Activated T-helper 1 cell treated with anti-CD3 and anti-CD28 coated beads, Interleukin-12 subunit alpha, Interleukin-12 subunit beta, Interleukin-2, Interleukin-4 antibody, amounts not matched to agents 30 ng/mL and 10 ng/mL and 1 ng/mL, durations not matched to agents 14 hours and 24 hours and 36 hours (primary cell): ENCODE measurements at regions of chr6 and their contacts with region 1.

Region 1: GRCh38 chr6:46221222-46221793 is 50.5 kb upstream of the ENPP5 start:
- DNase-seq: no peak
- H3K4me3 Mint-ChIP-seq: no peak overlapping the region
- H3K27ac Mint-ChIP-seq: no peak overlapping the region
- H3K4me1 Mint-ChIP-seq: peaks cover 11% of the 10 kb centered on the region
- H3K27me3 Mint-ChIP-seq: peaks cover 6% of the 10 kb centered on the region

Region 2: GRCh38 chr6:46129629-46130511 is 91.4 kb before region 1 on chr6 and contains the start of gene ENPP4:
- intact Hi-C with region 1: loop called (anchors 2 kb)
- DNase-seq: peak; percentile 92
- H3K4me3 Mint-ChIP-seq: peak within 1 kb of the TSS; percentile 91
- H3K27ac Mint-ChIP-seq: peak within 1 kb of the TSS; percentile 75
- H3K4me1 Mint-ChIP-seq: peaks cover 25% of the 10 kb centered on the region
- H3K27me3 Mint-ChIP-seq: peaks cover 2% of the 10 kb centered on the region
- total RNA-seq, gene ENPP4: 5.9 and 6.1 TPM in 2 replicates

Region 3: GRCh38 chr6:46410334-46410953 is 189.1 kb after region 1 on chr6:
- intact Hi-C with region 1: loop called (anchors 1 kb)
- DNase-seq: no peak
- H3K4me3 Mint-ChIP-seq: no peak overlapping the region
- H3K27ac Mint-ChIP-seq: no peak overlapping the region
- H3K4me1 Mint-ChIP-seq: no peaks in the 10 kb centered on the region
- H3K27me3 Mint-ChIP-seq: peaks cover 6% of the 10 kb centered on the region

Region 4: DNA sequence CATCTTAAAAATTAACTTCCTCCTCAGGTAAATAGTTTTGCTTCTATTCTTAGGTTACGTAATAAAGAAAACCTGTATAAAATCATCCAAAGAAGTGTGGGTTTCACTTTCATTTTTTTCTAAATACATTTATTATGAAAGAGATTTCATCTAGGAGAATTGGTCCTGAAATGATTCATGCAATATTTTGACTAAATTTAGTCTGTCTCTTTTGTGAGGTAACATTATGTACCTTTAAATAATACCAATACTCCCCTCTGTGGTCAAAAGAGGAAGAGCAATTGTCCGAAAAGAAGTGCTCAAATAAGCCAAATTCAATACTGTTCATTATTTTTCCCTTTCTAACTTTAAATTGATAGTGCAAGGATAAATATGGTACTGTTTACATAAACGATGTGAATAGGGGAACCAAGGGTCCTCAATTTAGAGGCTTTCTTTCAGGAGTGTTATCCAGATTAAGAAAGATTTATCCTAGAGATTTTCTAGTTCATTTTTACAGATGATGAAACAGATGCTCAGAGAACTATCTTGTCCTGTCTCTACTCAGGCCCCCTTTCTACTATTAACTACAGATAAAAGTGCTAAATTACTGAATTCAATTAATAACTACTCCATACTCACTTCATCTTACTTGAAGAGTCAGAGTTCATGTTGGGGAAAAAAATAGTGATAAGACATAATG is 405.1 kb after region 1 on chr6:
- intact Hi-C with region 1: loop called (anchors 1 kb)
- DNase-seq: no peak
- H3K4me3 Mint-ChIP-seq: no peak overlapping the region
- H3K27ac Mint-ChIP-seq: no peak overlapping the region
- H3K4me1 Mint-ChIP-seq: no peaks in the 10 kb centered on the region
- H3K27me3 Mint-ChIP-seq: peaks cover 9% of the 10 kb centered on the region

Region 5: DNA sequence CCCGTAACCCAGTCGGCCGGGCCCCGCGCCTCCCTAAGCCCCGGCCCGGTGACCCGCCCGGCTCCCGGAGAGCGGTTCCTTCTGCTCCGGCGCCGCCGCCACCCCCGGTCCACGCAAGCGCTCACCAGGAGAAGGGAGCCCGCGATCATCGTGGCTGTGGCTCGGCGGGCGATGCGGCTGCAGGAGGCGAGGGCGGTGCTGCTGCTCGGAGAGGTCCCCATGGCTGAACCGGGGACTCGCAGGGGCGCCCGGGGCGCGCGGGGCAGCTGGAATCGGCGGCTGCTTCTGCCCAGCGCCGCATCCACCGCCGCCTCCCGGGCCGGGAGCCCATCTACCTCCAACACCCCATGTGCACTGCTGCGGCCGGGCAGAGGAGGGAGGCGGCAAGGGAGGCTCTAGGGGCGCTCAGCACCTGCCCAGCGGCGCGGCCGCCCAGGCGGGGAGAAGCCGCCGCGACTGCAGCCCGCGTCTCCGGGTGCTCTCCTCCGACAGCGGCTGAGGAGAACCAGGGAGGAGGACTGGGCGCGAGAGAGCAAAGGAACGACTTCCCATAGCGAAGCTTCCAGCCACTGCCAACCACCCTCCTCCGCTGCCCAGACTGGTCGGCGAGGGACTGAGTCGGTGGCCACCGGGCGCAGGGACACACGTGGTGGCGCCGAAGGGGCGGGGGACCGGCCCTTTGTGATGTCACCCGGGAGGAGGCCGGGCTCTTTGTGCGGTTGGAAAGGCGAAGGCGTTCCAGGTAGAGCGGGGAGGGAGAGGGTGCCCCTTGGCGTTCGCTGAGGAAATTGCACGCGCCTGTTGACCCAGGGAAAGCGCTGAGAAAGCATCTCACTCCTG is 1088.2 kb after region 1 on chr6 and contains the start of gene TNFRSF21:
- intact Hi-C with region 1: loop called (anchors 2 kb)
- DNase-seq: peak; percentile 75
- H3K4me3 Mint-ChIP-seq: peak within 1 kb of the TSS; percentile 68
- H3K27ac Mint-ChIP-seq: no peak within 1 kb of the TSS
- H3K4me1 Mint-ChIP-seq: peaks cover 16% of the 10 kb centered on the region
- H3K27me3 Mint-ChIP-seq: peaks cover 52% of the 10 kb centered on the region
- total RNA-seq, gene TNFRSF21: 3.5 and 4.2 TPM in 2 replicates